Activated T-helper 1 cell treated with anti-CD3 and anti-CD28 coated beads, Interleukin-12 subunit alpha, Interleukin-12 subunit beta, Interleukin-2, Interleukin-4 antibody, amounts not matched to agents 30 ng/mL and 10 ng/mL and 1 ng/mL, durations not matched to agents 14 hours and 24 hours and 36 hours (primary cell): ENCODE measurements at regions of chr4 and their contacts with region 1.

Region 1: DNA sequence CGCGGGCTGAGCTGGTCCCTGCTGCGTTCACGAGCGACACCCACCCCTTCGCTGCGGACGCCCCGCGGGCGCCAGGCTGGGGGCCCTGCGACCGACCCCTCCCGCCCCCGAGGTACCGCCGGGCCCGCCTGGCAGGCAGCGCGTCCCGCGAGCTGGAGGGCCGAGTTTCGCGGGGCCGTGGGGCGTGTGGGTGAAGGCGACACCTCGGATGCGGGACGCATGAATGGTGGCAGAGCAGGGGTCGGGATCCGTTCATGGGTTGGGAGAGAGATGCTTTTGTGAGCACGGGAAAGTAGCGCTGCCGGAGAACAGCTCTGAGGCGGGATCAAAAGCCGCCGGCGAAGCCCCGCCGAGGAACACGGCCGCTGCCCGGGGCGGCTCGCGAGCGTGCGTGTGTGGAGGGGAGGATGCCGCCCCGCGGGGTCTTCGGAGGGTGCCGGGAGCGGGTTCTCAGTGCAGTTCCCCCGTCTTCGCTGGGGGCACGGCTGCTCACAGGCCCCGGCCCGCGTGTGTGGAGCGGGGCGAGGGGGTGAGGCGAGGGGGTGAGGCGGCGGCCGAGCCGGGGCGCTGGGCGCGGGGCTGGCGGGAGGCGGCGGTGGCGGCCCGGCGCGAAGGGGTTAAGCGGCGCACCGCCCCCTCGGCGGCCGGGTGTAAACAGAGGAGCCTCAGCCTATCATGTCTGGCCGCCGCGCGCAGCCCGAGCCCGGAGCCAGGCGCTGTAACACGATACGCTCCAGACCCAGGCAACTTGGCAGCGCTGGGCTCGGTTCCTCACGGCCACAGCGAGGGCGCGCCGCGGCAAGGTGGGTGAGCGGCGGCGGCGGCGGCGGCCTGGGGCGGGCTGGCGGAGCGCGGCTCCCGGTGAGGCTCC is 205.3 kb downstream of the TENM3 start:
- DNase-seq: peak; percentile 2
- H3K4me3 Mint-ChIP-seq: peak overlapping the region; percentile 55
- H3K27ac Mint-ChIP-seq: no peak overlapping the region
- H3K4me1 Mint-ChIP-seq: peaks cover 17% of the 10 kb centered on the region
- H3K27me3 Mint-ChIP-seq: peaks cover 54% of the 10 kb centered on the region

Region 2: DNA sequence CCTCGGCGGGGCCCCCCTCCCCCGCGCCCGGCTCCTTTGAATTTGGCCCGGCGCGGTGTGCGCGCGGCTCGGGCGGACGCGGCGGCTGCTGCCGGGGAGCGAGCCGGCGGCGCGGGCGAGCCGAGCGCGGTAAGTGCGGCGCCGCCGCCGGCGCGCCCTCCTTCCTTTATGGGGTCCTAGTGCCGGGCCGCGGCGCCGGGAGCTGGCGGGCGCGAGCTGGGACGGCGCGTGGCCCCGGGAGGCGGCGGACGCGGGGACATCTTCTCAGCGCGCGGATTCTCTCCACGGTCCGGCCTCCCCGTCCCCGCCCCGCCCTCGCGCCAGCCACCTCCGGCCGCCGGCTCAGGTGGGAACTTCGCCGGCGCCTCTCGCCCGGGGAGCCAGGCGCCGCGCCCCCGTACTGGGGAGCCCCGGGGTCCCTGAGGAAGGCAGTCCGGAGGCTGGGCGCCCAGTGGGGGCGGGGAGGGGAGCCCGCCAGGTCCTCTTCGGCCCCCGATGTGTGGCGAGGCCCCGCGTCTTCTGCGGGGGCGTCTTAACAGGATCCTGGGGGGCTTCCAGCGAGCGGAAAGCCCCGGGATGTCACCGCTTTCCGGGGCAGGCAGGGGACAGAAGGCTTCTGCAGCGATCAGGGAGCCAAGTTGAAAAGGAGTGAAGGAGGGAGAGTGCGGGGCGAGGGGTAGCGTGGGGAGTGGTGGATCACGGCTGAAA is 303.7 kb before region 1 on chr4:
- intact Hi-C with region 1: loop called (anchors 5 kb)
- DNase-seq: no peak
- H3K4me3 Mint-ChIP-seq: peak overlapping the region; percentile 72
- H3K27ac Mint-ChIP-seq: no peak overlapping the region
- H3K4me1 Mint-ChIP-seq: peaks cover 16% of the 10 kb centered on the region
- H3K27me3 Mint-ChIP-seq: peaks cover 57% of the 10 kb centered on the region

Region 3: DNA sequence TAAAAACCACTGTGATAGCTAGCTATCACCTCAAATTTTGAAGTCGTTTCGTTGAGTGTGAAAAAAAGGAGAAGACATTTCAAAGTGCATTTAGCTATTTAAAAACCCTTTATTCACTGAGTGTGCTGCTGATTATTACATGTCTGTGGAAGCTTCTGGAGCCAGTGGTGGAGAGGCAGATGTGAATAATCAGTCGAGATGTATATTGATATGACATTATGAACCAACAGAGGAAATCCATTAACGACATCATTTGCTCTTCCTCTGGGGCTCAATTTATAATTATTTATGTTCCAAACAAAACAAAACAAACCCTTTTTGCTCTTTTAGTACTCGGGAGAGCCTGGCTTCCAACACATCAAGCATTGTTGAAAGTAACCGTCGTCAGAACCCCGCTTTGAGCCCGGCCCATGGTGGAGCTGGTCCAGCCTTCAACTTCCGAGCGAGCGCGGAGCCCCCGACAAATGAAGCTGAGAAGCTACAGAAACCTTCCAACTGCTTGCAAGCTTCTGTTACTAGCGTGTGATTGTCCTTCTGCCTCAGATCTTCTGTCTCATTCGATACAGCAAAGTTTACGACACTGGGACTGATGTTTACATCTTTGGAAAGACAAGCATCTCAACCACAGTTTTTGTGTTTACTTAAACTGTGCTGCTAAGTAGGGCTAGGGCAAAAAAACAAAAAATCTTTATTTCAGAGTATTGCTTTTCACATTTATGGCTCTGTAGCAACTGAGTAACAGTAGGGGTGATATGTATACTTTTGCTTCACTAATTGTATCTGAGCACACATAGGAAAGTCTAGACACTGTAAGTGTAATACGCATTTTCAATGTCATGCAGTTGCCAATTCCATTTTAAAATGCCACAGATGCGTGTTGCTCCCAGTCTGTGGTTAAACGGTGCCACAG is 1568.5 kb after region 1 on chr4:
- intact Hi-C with region 1: loop called (anchors 5 kb)
- DNase-seq: no peak
- H3K4me3 Mint-ChIP-seq: no peak overlapping the region
- H3K27ac Mint-ChIP-seq: no peak overlapping the region
- H3K4me1 Mint-ChIP-seq: peaks cover 5% of the 10 kb centered on the region
- H3K27me3 Mint-ChIP-seq: peaks cover 10% of the 10 kb centered on the region